ENCODE measurements at regions of chr19 and their contacts with region 1.

Region 1: GRCh38 chr19:50198429-50199258 is 4.8 kb upstream of the MYH14 start:
- DNase-seq: no peak
- ATAC-seq: no peak
- H3K4me3 ChIP-seq: no peak overlapping the region
- H3K27ac ChIP-seq: no peak overlapping the region
- H3K4me1 ChIP-seq: no peaks in the 10 kb centered on the region
- H3K27me3 ChIP-seq: no peaks in the 10 kb centered on the region; the same call in 1 of the 2 replicates
- CTCF ChIP-seq: no peak

Region 2: GRCh38 chr19:50167314-50167721 is 31.3 kb before region 1 on chr19:
- CTCF ChIA-PET with region 1: interaction called, 12 read pairs
- POLR2A ChIA-PET with region 1: no interaction called
- in situ Hi-C with region 1: no loop called
- intact Hi-C with region 1: no loop called
- DNase-seq: no peak
- ATAC-seq: no peak
- H3K4me3 ChIP-seq: no peak overlapping the region
- H3K27ac ChIP-seq: no peak overlapping the region
- H3K4me1 ChIP-seq: no peaks in the 10 kb centered on the region
- H3K27me3 ChIP-seq: no peaks in the 10 kb centered on the region
- CTCF ChIP-seq: no peak

Region 3: GRCh38 chr19:50233308-50233910 is 34.8 kb after region 1 on chr19:
- CTCF ChIA-PET with region 1: no interaction called
- POLR2A ChIA-PET with region 1: interaction called, 10 read pairs
- in situ Hi-C with region 1: no loop called
- intact Hi-C with region 1: no loop called
- DNase-seq: no peak
- ATAC-seq: no peak
- H3K4me3 ChIP-seq: no peak overlapping the region
- H3K27ac ChIP-seq: no peak overlapping the region
- H3K4me1 ChIP-seq: no peaks in the 10 kb centered on the region
- H3K27me3 ChIP-seq: no peaks in the 10 kb centered on the region
- CTCF ChIP-seq: no peak